ENCODE measurements at regions of chr1 and their contacts with region 1.

Region 1: DNA sequence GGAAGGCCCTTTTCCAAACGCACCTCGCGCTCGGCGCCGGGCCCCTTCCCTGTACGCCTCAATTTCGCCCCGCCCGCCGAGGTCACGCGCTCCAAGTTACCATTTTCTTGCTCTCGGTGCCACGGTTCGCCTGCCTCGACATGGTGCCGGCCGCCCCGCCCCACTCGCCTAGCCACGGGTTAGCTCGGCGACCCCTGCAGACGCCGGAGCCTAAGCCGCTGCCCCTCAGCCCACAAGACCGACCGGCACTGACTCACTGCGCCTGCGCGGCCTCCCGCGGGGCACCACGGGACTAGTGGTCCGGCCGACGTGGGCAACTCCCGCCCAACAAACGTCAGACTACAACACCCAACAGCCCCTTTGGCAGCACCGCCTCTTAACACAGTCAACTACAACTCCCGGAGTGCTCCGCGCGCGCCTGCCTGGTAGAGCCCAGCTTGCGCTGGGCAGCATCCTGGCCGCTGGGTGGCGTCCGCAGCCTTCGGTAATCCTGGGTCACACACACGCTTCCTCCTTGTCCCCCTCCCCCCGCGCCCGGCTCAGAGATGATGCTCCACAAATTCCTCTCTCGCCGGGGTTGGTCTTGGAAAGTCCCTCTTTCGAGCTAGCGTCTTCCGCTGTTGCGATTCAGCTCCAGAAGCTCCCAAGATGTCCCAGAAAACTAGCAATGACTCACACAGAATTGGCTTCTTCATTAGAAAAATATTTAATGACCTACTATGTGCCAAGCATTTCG is at the start of gene TRAPPC3:
- DNase-seq: peak; percentile 100
- ATAC-seq: peak; percentile 92
- H3K4me3 Mint-ChIP-seq: peak within 1 kb of the TSS; percentile 90
- H3K27ac Mint-ChIP-seq: peak within 1 kb of the TSS; percentile 97
- H3K4me1 Mint-ChIP-seq: peaks cover 33% of the 10 kb centered on the region
- H3K27me3 Mint-ChIP-seq: peaks cover 27% of the 10 kb centered on the region
- CTCF ChIP-seq: peak; percentile 37; the same call in 1 of the 2 replicates
- total RNA-seq, gene TRAPPC3: 48.9 to 52.5 TPM (median 52.0 TPM) in 3 replicates

Region 2: DNA sequence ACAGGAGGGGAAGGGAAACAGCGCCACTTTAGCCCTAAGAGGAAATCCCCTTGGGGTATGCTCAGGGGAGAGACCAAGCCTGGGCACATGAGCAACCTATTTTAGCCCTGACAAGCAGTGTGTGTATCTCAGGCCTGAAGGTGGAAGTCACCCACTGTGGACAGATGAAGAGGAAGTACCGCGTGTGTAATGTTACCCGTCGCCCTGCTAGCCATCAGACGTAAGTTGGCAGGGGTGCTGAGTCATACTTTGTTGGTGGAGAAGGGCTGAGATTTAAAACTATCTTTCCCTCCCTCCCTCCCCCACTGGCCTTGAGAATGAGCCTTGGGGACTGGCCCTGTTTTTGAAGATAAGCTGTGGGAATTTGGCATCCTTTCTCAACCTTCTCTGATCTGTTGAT is 255.2 kb before region 1 on chr1:
- CTCF ChIA-PET with region 1: no interaction called
- POLR2A ChIA-PET with region 1: no interaction called
- DNase-seq: no peak
- ATAC-seq: no peak
- H3K4me3 Mint-ChIP-seq: no peak overlapping the region
- H3K27ac Mint-ChIP-seq: 0 out of 2 replicates have a peak overlapping the region, but pooled peaks have one; percentile 34
- H3K4me1 Mint-ChIP-seq: no peaks in the 10 kb centered on the region; the same call in 1 of the 2 replicates
- H3K27me3 Mint-ChIP-seq: no peaks in the 10 kb centered on the region
- CTCF ChIP-seq: no peak

Region 3: GRCh38 chr1:36128126-36128904 is 21.1 kb before region 1 on chr1:
- CTCF ChIA-PET with region 1: interaction called, 57 read pairs
- POLR2A ChIA-PET with region 1: no interaction called
- DNase-seq: no peak
- ATAC-seq: no peak
- H3K4me3 Mint-ChIP-seq: no peak overlapping the region
- H3K27ac Mint-ChIP-seq: no peak overlapping the region
- H3K4me1 Mint-ChIP-seq: peaks cover 13% of the 10 kb centered on the region
- H3K27me3 Mint-ChIP-seq: peaks cover 27% of the 10 kb centered on the region
- CTCF ChIP-seq: no peak

Region 4: DNA sequence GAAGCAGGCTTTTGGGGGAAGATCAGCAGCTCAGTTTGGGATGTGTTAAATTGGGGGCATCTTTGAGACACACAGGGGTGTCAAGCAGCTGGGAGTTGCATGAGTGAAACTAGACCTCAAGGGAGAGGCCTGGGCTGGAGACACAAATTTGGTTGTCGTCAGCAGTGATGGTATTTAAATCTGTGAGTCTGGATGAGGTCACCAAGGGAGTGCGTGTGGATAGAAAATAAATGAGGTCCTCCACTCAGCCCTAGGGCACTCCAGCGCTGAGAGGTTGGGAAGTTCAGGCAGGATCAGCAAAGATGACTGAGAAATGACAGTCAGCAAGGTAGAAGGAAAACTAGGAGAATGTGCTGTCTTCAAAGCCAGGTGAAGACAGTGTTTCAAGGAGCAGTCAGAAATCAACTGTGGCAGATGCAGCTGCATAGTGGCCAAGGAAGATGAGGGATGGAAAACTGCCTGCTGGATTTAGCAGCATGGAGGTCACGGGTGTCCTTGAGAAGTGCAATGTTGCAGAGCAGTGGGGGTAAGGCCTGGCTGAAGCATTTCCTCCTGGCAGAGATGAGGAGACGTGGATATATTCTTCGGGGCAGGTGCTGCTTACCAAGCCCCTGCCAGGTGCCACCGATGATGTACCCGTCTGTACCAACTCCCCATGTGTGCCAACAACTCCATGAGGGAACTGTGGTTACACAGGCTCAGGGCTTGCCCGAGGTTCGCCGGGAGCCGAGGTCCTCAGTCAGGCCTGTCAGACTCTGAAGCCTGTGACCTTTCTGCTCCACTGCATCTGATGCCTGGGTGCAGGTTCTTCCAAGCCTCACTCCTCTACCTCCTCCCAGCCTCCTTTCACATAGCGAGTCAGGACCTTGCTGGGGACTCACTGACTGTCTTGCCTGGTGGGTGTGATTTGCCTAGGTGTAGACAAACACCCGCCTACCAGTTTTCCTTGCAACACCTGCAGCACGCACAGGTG is 17.8 kb after region 1 on chr1:
- CTCF ChIA-PET with region 1: interaction called, 74 read pairs
- POLR2A ChIA-PET with region 1: interaction called, 19 read pairs
- DNase-seq: no peak
- ATAC-seq: no peak
- H3K4me3 Mint-ChIP-seq: no peak overlapping the region
- H3K27ac Mint-ChIP-seq: peak overlapping the region; percentile 12
- H3K4me1 Mint-ChIP-seq: peaks cover 3% of the 10 kb centered on the region
- H3K27me3 Mint-ChIP-seq: no peaks in the 10 kb centered on the region
- CTCF ChIP-seq: no peak

Region 5: DNA sequence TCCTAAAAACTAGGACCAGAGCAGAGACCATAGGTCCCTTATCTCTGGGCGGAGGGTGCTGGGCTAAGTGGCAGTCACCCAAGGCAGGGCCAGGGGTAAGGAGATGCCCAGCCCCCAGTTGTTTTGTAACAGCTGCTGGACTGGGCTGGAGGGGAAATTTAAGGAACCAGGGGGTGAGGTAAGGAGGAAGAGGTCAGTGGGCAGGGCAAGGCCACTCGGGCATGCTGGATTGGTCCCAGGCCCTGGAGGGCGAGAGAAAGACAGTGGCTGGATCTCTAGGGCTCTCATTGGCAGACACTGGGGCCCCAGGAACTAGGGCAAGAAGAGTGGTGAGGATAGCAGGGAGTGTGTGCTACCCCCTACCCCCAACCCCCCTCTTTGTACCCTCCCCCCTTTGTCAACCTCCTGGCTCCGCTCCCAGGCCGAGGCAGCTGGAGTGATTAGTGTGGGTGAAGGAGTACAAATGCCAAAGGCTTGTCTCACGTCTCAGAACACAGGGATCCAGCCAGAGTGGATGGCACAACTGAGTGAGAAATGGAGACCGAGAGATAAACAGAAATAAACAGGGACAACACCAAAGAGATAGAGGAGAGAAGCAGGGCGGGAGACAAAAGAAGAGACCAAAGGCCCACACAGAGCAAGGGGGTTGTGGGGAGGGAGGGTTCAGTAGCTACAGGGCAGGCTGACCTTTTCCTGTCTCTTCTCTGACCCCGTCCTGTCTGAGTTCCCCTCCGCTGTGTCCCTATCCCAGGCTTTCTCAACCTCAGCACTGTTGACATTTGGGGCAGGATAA is 54.3 kb after region 1 on chr1:
- CTCF ChIA-PET with region 1: interaction called, 10 read pairs
- POLR2A ChIA-PET with region 1: no interaction called
- DNase-seq: no peak
- ATAC-seq: peak; percentile 66
- H3K4me3 Mint-ChIP-seq: no peak overlapping the region
- H3K27ac Mint-ChIP-seq: peak overlapping the region; percentile 85; the same call in 1 of the 2 replicates
- H3K4me1 Mint-ChIP-seq: peaks cover 15% of the 10 kb centered on the region
- H3K27me3 Mint-ChIP-seq: no peaks in the 10 kb centered on the region; the same call in 1 of the 2 replicates
- CTCF ChIP-seq: no peak

Region 6: DNA sequence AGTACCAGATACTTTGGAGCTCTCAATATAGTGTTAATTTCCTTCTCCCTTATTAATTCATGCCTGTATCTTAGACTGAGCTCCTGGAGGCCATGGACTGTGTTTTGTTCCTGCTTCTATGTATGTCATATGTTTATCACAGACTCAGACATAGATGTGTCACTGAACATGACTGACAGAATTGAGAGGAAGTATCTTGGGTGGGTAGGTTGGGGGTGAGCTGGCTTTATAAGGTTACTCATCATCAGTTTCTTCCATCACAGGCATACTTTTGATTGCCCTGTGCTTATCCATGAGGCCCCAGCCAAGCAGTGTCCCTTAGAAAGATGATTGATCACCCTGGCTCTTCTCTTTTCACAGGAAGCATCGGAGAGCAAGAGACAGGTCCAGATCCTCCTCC is 151.1 kb after region 1 on chr1:
- CTCF ChIA-PET with region 1: interaction called, 11 read pairs
- POLR2A ChIA-PET with region 1: interaction called, 9 read pairs
- DNase-seq: no peak
- ATAC-seq: no peak
- H3K4me3 Mint-ChIP-seq: no peak overlapping the region
- H3K27ac Mint-ChIP-seq: peak overlapping the region; percentile 12; the same call in 1 of the 2 replicates
- H3K4me1 Mint-ChIP-seq: peaks cover 5% of the 10 kb centered on the region
- H3K27me3 Mint-ChIP-seq: no peaks in the 10 kb centered on the region
- CTCF ChIP-seq: no peak

Region 7: DNA sequence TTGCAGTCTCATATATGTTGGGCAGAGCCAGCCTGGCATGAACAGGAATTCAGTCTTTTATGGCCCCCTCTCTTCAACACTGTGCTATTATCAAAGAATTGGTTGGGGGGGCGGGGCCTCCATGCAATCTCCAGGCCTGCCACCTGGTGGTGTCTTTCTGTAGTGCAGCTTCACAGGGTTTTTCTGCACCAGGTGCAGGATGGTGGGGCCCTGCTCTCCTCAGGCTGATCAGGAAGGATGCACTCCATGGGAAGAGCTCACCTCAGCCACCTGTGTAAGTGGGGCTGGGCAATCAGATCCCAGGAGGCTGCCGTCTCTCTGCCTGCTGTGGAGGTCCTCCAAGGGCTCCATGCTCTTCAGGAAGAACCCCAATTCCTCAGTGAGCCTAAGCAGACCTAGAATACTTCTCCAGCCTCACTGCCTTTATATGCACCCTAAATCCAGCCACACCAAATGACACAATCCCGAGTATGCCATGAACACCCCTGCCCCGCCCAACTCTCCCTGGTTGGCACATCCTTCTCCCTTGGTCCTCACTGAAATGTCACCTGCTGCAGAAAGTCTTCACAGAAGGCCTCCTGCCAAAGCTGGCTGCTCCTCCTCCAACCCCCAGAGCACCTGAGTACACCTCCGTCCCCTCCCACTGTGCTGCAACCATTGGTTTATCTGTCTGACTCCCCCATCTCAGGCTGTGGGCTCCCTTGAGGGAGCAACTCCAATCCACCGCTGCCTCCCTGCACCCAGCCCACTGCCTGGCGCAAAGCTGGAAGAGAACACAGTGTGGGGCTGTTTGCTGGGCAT is 219.9 kb after region 1 on chr1:
- CTCF ChIA-PET with region 1: interaction called, 14 read pairs
- POLR2A ChIA-PET with region 1: no interaction called
- DNase-seq: peak; percentile 92
- ATAC-seq: peak; percentile 76
- H3K4me3 Mint-ChIP-seq: no peak overlapping the region
- H3K27ac Mint-ChIP-seq: peak overlapping the region; percentile 75
- H3K4me1 Mint-ChIP-seq: peaks cover 48% of the 10 kb centered on the region
- H3K27me3 Mint-ChIP-seq: no peaks in the 10 kb centered on the region
- CTCF ChIP-seq: peak; percentile 87